Dorsolateral prefrontal cortex (tissue), 120 donors: ENCODE measurements at regions of chr1 and their contacts with region 1.

Region 1: GRCh38 chr1:238409191-238409850 is 518.6 kb upstream of the ZP4 start:
- DNase-seq: no peak
- H3K4me3 ChIP-seq: no peak overlapping the region
- H3K27ac ChIP-seq: no peak overlapping the region
- H3K27me3 ChIP-seq: no peaks in the 10 kb centered on the region
- CTCF ChIP-seq: no peak

Region 2: GRCh38 chr1:238252033-238252802 is 157.1 kb before region 1 on chr1:
- intact Hi-C with region 1: loop called (anchors 5 to 10 kb)
- DNase-seq: peak in 9 of 10 donors; percentile 29 to 81 (median 64)
- H3K4me3 ChIP-seq: no peak overlapping the region
- H3K27ac ChIP-seq: no peak overlapping the region
- H3K27me3 ChIP-seq: no peaks in the 10 kb centered on the region
- CTCF ChIP-seq: peak; percentile 45 to 82 (median 60)